PC-3 (cell line): ENCODE measurements at regions of chr10 and their contacts with region 1.

Region 1: DNA sequence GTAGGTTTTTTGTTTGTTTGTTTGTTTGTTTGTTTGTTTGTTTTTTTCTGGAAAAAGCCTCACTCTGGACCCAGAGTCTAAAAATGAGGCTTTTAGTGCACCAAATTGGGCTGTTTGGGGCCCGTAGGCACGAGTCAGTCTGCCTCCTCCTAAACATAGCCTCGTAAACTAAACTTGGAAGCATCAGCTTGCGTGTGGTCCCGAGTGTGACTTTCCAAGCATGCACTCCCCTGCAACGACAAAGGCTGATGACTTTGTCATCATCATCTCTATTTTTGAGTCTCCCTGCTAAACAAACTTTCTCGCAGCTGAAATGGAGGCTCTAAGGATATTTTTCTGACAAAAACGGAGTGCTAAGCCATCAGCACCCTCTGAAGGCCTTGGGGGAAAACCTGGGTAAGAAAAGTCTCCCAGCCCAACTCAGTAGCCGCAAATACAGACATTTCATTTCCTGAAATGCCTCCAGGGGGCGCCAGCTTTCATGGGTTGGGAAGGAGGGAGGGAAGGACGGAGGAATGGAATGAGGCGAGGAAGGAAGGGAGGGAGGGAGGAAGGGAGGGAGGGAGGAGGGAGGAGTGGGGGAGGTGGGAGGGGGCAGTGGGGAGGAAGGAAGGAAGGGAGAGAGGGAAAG is 245.9 kb downstream of the KCNMA1 start:
- DNase-seq: peak; percentile 100
- ATAC-seq: peak; percentile 25
- H3K4me3 ChIP-seq: peak overlapping the region; percentile 10; the same call in 1 of the 2 replicates
- H3K27ac ChIP-seq: peak overlapping the region; percentile 84
- H3K4me1 ChIP-seq: peaks cover 89% of the 10 kb centered on the region
- H3K27me3 ChIP-seq: no peaks in the 10 kb centered on the region
- CTCF ChIP-seq: peak; percentile 97

Region 2: DNA sequence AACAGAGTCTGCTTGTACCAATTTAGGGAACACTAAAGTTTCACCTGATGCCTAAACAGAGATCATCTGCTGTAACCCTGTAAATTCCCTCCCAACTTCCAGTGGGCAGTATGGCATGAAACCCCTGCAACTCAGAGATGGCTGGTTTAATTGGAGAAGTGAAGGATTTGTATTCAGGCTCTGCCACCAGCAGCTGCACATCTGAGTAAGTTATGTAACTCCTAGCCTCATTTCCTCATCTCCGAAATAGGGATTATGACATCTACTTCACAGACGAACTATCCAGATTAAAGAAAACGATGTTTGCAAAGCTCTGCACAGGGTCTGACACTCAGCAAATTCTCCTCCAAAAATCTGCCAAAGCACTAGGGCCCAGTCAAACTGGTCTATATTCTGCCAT is 247.1 kb before region 1 on chr10:
- CTCF ChIA-PET with region 1: no interaction called
- POLR2A ChIA-PET with region 1: no interaction called
- intact Hi-C with region 1: no loop called
- DNase-seq: no peak
- ATAC-seq: no peak
- H3K4me3 ChIP-seq: no peak overlapping the region
- H3K27ac ChIP-seq: no peak overlapping the region
- H3K4me1 ChIP-seq: no peaks in the 10 kb centered on the region
- H3K27me3 ChIP-seq: no peaks in the 10 kb centered on the region
- CTCF ChIP-seq: no peak

Region 3: DNA sequence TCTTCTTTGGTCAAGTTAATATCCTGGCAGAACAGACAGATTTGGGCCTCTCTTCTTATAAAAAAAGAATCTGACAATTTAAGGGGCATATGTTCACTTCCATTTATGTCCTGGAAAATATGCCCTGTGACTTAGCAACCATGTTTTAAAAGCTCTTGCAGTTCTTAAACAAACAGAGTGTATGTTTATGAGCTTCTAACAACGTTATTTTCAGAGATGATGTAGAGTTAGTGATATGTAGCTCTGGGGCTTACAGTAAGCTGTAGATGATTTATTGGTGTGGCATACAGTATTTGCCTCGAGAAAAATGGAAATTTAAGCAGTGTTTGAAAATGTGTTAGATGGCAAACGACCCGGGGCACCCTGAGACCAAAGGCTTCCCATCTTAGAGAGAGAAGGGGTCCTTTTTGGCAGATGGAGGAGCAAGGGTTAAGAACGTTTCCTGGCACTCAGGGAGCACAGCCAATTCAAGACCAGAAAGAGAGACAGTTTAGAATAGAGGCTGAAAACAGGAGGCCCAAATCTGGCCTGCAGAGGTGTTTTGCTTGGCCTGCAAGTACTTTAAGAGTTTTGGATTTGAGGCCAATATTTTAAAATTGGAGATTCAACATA is 151.6 kb before region 1 on chr10:
- CTCF ChIA-PET with region 1: interaction called, 12 read pairs
- POLR2A ChIA-PET with region 1: interaction called, 3 read pairs
- intact Hi-C with region 1: no loop called
- DNase-seq: peak; percentile 88
- ATAC-seq: peak; percentile 80
- H3K4me3 ChIP-seq: no peak overlapping the region
- H3K27ac ChIP-seq: peak overlapping the region; percentile 58
- H3K4me1 ChIP-seq: peaks cover 52% of the 10 kb centered on the region
- H3K27me3 ChIP-seq: no peaks in the 10 kb centered on the region
- CTCF ChIP-seq: no peak

Region 4: GRCh38 chr10:77350711-77351119 is 41.0 kb before region 1 on chr10:
- CTCF ChIA-PET with region 1: interaction called, 31 read pairs
- POLR2A ChIA-PET with region 1: interaction called, 14 read pairs
- intact Hi-C with region 1: loop called (anchors 1 kb)
- DNase-seq: peak; percentile 100
- ATAC-seq: peak; percentile 96
- H3K4me3 ChIP-seq: 0 out of 2 replicates have a peak overlapping the region, but pooled peaks have one; percentile 0
- H3K27ac ChIP-seq: peak overlapping the region; percentile 77
- H3K4me1 ChIP-seq: peaks cover 52% of the 10 kb centered on the region
- H3K27me3 ChIP-seq: no peaks in the 10 kb centered on the region
- CTCF ChIP-seq: 0 out of 2 replicates have a peak, but pooled peaks have one; percentile 18

Region 5: GRCh38 chr10:77422491-77423338 is 31.0 kb after region 1 on chr10:
- CTCF ChIA-PET with region 1: no interaction called
- POLR2A ChIA-PET with region 1: no interaction called
- intact Hi-C with region 1: no loop called
- DNase-seq: no peak
- ATAC-seq: no peak
- H3K4me3 ChIP-seq: no peak overlapping the region
- H3K27ac ChIP-seq: no peak overlapping the region
- H3K4me1 ChIP-seq: peaks cover 5% of the 10 kb centered on the region
- H3K27me3 ChIP-seq: no peaks in the 10 kb centered on the region
- CTCF ChIP-seq: no peak

Region 6: DNA sequence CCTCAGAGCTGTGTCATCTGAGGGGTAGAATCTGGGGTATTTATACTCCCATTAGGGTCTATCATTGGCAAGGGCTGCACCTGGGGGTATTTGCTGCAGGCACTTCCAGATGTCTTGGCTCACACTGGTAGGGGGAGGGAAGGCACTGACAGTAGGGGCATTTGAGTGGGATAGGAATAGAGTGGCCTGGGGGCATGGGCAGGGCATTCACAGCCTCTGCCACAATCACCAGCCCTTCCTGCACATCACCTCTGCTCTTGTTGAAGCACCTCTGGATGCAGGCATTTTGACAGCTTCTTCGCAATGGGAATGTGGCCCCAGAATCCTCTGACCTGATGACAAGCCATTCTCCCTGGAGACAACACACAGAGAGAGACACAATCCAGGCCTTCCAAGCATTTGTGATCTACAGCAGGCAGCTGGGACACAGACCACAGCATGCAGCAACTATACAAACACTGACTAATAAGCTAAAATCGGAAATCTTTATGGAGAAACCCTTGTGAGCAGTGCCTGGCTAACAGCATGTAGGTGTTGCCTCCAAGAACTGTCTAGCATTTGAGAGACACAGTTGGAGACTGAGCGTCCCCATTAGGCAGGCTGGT is 67.4 kb after region 1 on chr10:
- CTCF ChIA-PET with region 1: interaction called, 4 read pairs
- POLR2A ChIA-PET with region 1: no interaction called
- intact Hi-C with region 1: loop called (anchors 2 kb)
- DNase-seq: peak; percentile 83
- ATAC-seq: peak; percentile 72
- H3K4me3 ChIP-seq: no peak overlapping the region
- H3K27ac ChIP-seq: no peak overlapping the region
- H3K4me1 ChIP-seq: peaks cover 41% of the 10 kb centered on the region
- H3K27me3 ChIP-seq: no peaks in the 10 kb centered on the region
- CTCF ChIP-seq: no peak

Region 7: DNA sequence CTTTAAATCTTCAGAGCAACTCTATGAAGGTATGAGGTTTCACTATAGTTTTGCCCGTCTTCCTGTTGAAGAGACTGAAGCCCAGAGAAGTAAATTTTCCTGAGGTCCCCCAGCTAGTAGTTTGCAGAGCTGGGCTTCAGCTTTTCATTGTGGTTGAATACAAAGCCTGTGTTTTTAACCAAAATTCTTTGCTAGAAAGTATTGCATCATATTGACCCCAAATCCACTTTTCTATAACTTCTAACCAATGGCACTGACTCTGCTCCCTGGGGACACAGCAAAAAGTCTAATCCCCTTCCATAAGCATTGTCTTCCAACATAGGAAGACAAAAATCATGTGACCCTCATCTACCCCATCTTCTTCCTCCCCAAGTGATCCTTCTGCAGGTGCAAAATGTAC is 152.9 kb after region 1 on chr10:
- CTCF ChIA-PET with region 1: interaction called, 13 read pairs
- POLR2A ChIA-PET with region 1: no interaction called
- intact Hi-C with region 1: no loop called
- DNase-seq: no peak
- ATAC-seq: no peak
- H3K4me3 ChIP-seq: no peak overlapping the region
- H3K27ac ChIP-seq: no peak overlapping the region
- H3K4me1 ChIP-seq: peaks cover 5% of the 10 kb centered on the region
- H3K27me3 ChIP-seq: no peaks in the 10 kb centered on the region
- CTCF ChIP-seq: no peak

Region 8: DNA sequence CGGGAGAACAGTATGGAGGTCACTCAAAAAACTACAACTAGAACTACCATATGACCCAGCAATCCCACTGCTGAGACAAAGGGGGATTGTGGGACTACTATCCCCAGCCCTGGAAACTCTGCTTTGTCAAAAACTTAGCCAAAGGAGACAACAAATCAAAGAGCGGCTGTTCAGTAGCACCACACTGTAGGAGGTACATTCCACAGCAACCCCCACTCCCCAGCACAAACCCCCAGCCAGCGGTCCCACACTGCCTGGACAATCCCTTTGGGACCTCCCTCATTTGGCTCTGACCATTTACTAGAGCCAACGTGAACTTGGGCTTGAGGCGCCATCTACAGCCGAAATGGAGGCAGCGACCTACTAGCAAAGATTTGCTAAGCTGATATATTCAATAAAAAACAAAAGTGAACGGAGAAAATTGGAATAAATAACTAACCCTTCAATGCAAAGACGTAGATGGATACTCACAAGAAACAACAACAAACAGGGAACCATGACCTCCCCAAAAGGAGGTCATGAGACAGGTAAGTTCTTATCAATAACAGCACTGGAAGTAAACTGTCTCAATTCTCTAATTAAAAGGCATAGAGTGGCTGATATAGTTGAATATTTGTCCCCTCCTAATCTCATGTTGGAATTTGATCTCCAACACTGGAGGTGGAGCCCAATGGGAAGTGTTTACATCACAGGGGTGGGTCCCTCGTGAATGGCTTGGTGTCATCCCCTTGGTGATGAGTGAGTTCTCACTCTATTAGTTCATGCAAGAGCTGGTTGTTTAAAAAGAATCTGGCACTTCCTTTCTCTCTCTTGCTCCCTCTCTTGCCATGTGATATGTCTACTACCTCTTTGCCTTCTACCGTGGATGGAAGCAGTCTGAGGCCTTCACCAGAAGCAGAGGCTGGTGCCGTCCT is 364.9 kb after region 1 on chr10:
- CTCF ChIA-PET with region 1: no interaction called
- POLR2A ChIA-PET with region 1: no interaction called
- intact Hi-C with region 1: loop called (anchors 5 kb)
- DNase-seq: peak; percentile 98
- ATAC-seq: peak; percentile 97
- H3K4me3 ChIP-seq: no peak overlapping the region
- H3K27ac ChIP-seq: no peak overlapping the region
- H3K4me1 ChIP-seq: peaks cover 3% of the 10 kb centered on the region; the same call in 1 of the 2 replicates
- H3K27me3 ChIP-seq: no peaks in the 10 kb centered on the region
- CTCF ChIP-seq: peak; percentile 100